ENCODE measurements at regions of chr12 and their contacts with region 1.

Region 1: DNA sequence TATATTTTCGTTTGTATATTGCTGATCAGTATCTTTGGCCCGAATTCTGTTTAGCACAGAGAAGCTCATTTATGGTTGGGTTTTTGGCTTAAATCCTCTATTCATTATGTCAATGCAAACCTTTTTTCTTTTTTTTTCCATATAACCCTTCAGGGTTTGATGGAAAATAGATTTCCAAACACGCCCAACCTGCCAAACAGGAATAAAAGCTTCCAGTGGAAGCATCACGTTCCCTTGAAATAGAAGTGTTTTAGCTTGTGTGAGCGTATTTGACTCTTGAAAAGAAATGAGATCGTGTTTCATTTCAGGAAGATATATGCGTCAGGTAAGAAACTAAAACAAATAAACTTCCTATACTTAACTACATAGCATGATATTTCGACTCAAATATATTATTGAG is at the start of gene PIK3C2G:
- DNase-seq: no peak
- H3K27ac ChIP-seq: no peak within 1 kb of the TSS
- CTCF ChIP-seq: no peak

Region 2: GRCh38 chr12:18250313-18250916 is 10.8 kb before region 1 on chr12:
- CTCF ChIA-PET with region 1: interaction called, 12 read pairs
- POLR2A ChIA-PET with region 1: no interaction called
- DNase-seq: peak; percentile 25
- H3K27ac ChIP-seq: no peak overlapping the region
- CTCF ChIP-seq: peak; percentile 50